Endothelial cell of umbilical vein (primary cell): ENCODE measurements at regions of chr3 and their contacts with region 1.

Region 1: GRCh38 chr3:179562591-179563270 is at the start of gene ACTL6A:
- DNase-seq: peak; percentile 100
- H3K4me3 ChIP-seq: peak within 1 kb of the TSS; percentile 55 to 75 (median 70)
- H3K27ac ChIP-seq: peak within 1 kb of the TSS; percentile 25
- H3K4me1 ChIP-seq: peaks cover 7% of the 10 kb centered on the region
- H3K27me3 ChIP-seq: no peaks in the 10 kb centered on the region
- CTCF ChIP-seq: no peak
- POLR2A ChIP-seq: peak; percentile 73
- total RNA-seq, gene ACTL6A: 63.1 and 68.3 TPM in 2 replicates

Region 2: GRCh38 chr3:178325330-178325729 is 1237.4 kb before region 1 on chr3:
- CTCF ChIA-PET with region 1: no interaction called
- POLR2A ChIA-PET with region 1: no interaction called
- dilution Hi-C with region 1: no loop called
- intact Hi-C with region 1: no loop called
- DNase-seq: peak; percentile 76
- H3K4me3 ChIP-seq: no peak overlapping the region
- H3K27ac ChIP-seq: peak overlapping the region; percentile 2
- H3K4me1 ChIP-seq: peaks cover 13% of the 10 kb centered on the region
- H3K27me3 ChIP-seq: no peaks in the 10 kb centered on the region
- CTCF ChIP-seq: peak in 1 of 2 donors; percentile 15
- POLR2A ChIP-seq: no peak

Region 3: GRCh38 chr3:179071550-179072397 is 491.0 kb before region 1 on chr3 and contains the start of gene ZMAT3:
- CTCF ChIA-PET with region 1: no interaction called
- POLR2A ChIA-PET with region 1: no interaction called
- dilution Hi-C with region 1: no loop called
- intact Hi-C with region 1: loop called (anchors 2 kb)
- DNase-seq: peak; percentile 93
- H3K4me3 ChIP-seq: peak within 1 kb of the TSS; percentile 18 to 56 (median 53)
- H3K27ac ChIP-seq: peak within 1 kb of the TSS; percentile 81
- H3K4me1 ChIP-seq: peaks cover 10% of the 10 kb centered on the region
- H3K27me3 ChIP-seq: no peaks in the 10 kb centered on the region
- CTCF ChIP-seq: no peak
- POLR2A ChIP-seq: peak; percentile 89
- total RNA-seq, gene ZMAT3: 33.1 and 35.5 TPM in 2 replicates

Region 4: DNA sequence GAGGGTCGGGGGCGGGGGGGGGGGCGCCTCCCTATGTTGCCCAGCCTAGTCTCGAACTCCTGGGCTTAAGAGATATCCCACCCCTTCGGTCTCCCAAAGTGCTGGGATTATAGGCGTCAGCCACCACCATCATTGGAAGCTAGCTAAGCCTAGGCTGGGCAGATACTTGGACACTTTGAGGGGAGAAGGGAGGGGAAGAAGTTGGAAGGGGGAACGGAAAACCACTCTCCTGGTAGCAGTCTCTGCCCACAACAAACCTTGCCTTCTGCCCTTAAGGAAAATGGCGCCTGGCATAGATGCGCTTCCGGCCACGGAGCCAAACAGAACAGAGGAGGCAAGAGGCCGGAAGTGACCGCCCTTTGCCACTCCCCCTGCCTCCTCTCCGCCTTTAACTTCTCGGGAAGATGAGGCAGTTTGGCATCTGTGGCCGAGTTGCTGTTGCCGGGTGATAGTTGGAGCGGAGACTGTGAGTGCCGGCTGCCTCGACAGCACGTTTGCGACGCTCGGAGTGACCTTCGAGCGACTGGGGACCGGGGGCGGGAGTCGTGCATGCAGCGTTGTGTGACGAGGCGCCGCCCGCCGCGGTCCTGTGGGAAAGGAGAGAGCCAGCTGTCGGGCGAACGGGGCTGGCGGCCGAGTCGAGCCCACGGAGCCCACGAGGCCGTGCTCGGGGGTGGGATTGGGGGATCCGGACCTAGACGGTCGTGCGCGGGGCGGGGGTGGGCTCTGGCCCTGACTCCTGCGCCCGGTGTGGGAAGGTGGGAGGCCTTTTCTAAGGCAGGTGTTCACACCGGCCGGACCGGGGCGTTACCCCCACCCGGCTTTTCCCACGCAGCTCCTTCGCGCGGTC is 215.2 kb before region 1 on chr3 and contains the start of gene MFN1:
- CTCF ChIA-PET with region 1: no interaction called
- POLR2A ChIA-PET with region 1: interaction called, 4 read pairs
- dilution Hi-C with region 1: no loop called
- intact Hi-C with region 1: loop called (anchors 1 kb)
- DNase-seq: peak; percentile 97
- H3K4me3 ChIP-seq: peak within 1 kb of the TSS; percentile 38 to 99 (median 79)
- H3K27ac ChIP-seq: peak within 1 kb of the TSS; percentile 19
- H3K4me1 ChIP-seq: peaks cover 9% of the 10 kb centered on the region
- H3K27me3 ChIP-seq: no peaks in the 10 kb centered on the region
- CTCF ChIP-seq: no peak
- POLR2A ChIP-seq: peak; percentile 92
- total RNA-seq, gene MFN1: 42.9 and 52.9 TPM in 2 replicates

Region 5: GRCh38 chr3:179446501-179446900 is 116.2 kb before region 1 on chr3:
- CTCF ChIA-PET with region 1: interaction called, 57 read pairs
- POLR2A ChIA-PET with region 1: interaction called, 4 read pairs
- dilution Hi-C with region 1: no loop called
- intact Hi-C with region 1: loop called (anchors 1 kb)
- DNase-seq: peak; percentile 73
- H3K4me3 ChIP-seq: no peak overlapping the region
- H3K27ac ChIP-seq: no peak overlapping the region
- H3K4me1 ChIP-seq: peaks cover 18% of the 10 kb centered on the region
- H3K27me3 ChIP-seq: no peaks in the 10 kb centered on the region
- CTCF ChIP-seq: peak; percentile 21 to 27
- POLR2A ChIP-seq: no peak

Region 6: GRCh38 chr3:179482857-179483256 is 79.9 kb before region 1 on chr3:
- CTCF ChIA-PET with region 1: no interaction called
- POLR2A ChIA-PET with region 1: no interaction called
- dilution Hi-C with region 1: no loop called
- intact Hi-C with region 1: loop called (anchors 1 kb)
- DNase-seq: peak; percentile 77
- H3K4me3 ChIP-seq: peak overlapping the region in 1 of 3 experiments; percentile 21
- H3K27ac ChIP-seq: peak overlapping the region; percentile 73
- H3K4me1 ChIP-seq: peaks cover 23% of the 10 kb centered on the region
- H3K27me3 ChIP-seq: no peaks in the 10 kb centered on the region
- CTCF ChIP-seq: no peak
- POLR2A ChIP-seq: no peak

Region 7: DNA sequence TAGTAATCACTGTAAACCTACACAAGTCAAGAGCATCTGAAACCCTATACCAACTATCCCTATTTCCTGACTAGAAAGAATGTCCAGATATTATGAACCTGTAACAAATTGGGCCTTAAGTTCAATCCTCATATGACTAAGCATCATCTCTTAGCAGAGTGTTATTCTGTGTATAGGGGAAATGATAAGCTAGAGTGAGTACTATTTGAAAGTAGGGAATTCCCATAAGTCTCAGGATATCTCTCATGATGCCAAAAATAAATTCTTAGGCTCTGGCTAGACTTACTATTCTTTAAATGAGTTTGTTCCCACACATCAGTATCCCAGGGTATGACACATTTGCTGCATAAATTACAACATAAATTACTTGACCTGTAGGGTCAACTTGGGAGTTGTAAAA is 26.4 kb after region 1 on chr3:
- CTCF ChIA-PET with region 1: no interaction called
- POLR2A ChIA-PET with region 1: no interaction called
- dilution Hi-C with region 1: no loop called
- intact Hi-C with region 1: no loop called
- DNase-seq: peak; percentile 36
- H3K4me3 ChIP-seq: no peak overlapping the region
- H3K27ac ChIP-seq: no peak overlapping the region
- H3K4me1 ChIP-seq: no peaks in the 10 kb centered on the region
- H3K27me3 ChIP-seq: no peaks in the 10 kb centered on the region
- CTCF ChIP-seq: no peak
- POLR2A ChIP-seq: no peak

Region 8: DNA sequence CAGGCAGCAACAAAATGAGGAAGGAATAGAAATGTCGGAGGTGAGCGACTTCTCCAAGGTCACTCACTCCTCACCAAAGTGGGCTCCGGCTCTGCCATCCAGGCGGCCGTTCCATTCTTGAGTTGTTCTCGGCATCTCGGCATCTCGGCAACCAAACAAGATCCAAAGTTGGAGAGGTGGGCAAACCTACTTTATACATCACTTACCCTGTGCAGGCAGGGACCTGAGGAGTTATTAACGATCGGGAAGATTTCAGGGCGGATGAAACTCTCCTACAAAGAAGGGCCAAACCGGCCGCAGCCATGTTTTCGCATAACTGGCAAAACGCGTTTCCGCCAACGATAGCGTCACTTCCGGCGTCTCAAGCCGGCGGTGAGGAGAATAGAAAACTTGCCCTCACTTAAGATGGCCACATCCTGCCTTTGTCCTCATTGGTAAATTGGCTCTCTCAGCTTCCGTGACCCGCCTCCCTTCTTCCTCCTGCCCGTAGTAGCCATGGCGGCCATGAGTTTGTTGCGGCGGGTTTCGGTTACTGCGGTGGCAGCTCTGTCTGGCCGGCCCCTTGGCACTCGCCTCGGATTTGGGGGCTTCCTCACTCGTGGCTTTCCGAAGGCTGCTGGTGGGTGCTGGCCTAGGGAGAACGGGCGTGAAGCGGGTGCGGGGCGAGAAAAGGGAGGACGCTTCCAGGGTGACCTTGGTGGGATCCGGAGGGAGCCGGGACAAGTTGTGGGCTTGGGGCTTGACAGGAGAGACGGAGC is 41.8 kb after region 1 on chr3 and contains the starts of genes MRPL47 and NDUFB5:
- CTCF ChIA-PET with region 1: no interaction called
- POLR2A ChIA-PET with region 1: interaction called, 3 read pairs
- dilution Hi-C with region 1: no loop called
- intact Hi-C with region 1: loop called (anchors 1 kb)
- DNase-seq: peak; percentile 97
- H3K4me3 ChIP-seq: peak within 1 kb of the TSS; percentile 59 to 94 (median 77)
- H3K27ac ChIP-seq: peak within 1 kb of the TSS; percentile 84
- H3K4me1 ChIP-seq: peaks cover 14% of the 10 kb centered on the region
- H3K27me3 ChIP-seq: no peaks in the 10 kb centered on the region
- CTCF ChIP-seq: no peak
- POLR2A ChIP-seq: peak; percentile 94
- total RNA-seq, gene MRPL47: 47.0 and 51.2 TPM in 2 replicates
- total RNA-seq, gene NDUFB5: 68.3 and 74.9 TPM in 2 replicates

Region 9: DNA sequence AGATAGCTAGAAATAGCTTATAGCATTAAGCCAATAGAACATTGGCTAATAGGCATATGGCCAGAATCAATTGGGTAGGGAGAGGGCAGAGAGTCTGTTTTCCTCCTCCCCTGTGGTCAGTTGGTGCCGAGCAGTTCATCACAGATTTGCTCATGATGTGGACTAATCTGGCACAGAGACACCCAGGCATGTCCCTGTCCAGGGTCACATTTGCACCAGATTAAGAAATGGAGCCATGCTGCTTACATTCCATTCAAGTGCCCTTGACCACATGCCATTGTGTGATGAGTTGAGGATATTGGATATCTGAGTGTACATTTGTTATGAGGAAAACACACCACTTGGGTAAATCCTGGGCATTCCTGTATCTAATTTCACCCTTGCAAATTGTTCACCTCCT is 143.5 kb after region 1 on chr3:
- CTCF ChIA-PET with region 1: no interaction called
- POLR2A ChIA-PET with region 1: no interaction called
- dilution Hi-C with region 1: no loop called
- intact Hi-C with region 1: no loop called
- DNase-seq: no peak
- H3K4me3 ChIP-seq: no peak overlapping the region
- H3K27ac ChIP-seq: no peak overlapping the region
- H3K4me1 ChIP-seq: peaks cover 4% of the 10 kb centered on the region
- H3K27me3 ChIP-seq: no peaks in the 10 kb centered on the region
- CTCF ChIP-seq: no peak
- POLR2A ChIP-seq: no peak

Region 10: GRCh38 chr3:179811321-179812095 is 248.8 kb after region 1 on chr3:
- CTCF ChIA-PET with region 1: no interaction called
- POLR2A ChIA-PET with region 1: no interaction called
- dilution Hi-C with region 1: no loop called
- intact Hi-C with region 1: no loop called
- DNase-seq: peak; percentile 55
- H3K4me3 ChIP-seq: no peak overlapping the region
- H3K27ac ChIP-seq: no peak overlapping the region
- H3K4me1 ChIP-seq: no peaks in the 10 kb centered on the region
- H3K27me3 ChIP-seq: no peaks in the 10 kb centered on the region
- CTCF ChIP-seq: peak; percentile 53 to 59
- POLR2A ChIP-seq: no peak